PC-9 (cell line): ENCODE measurements at regions of chr2 and their contacts with region 1.

Region 1: GRCh38 chr2:55232084-55232862 is at the starts of genes CLHC1 and RPS27A:
- DNase-seq: peak; percentile 94 to 98
- H3K4me3 ChIP-seq: peak within 1 kb of the TSS; percentile 97
- H3K27ac ChIP-seq: peak within 1 kb of the TSS; percentile 83
- H3K4me1 ChIP-seq: peaks cover 29% of the 10 kb centered on the region
- H3K27me3 ChIP-seq: no peaks in the 10 kb centered on the region
- CTCF ChIP-seq: peak; percentile 7; the same call in 1 of the 2 replicates
- total RNA-seq, gene CLHC1: 20.5 and 27.1 TPM in 2 replicates
- total RNA-seq, gene RPS27A: 1,269 and 1,616 TPM in 2 replicates

Region 2: GRCh38 chr2:54673501-54673998 is 558.7 kb before region 1 on chr2:
- CTCF ChIA-PET with region 1: no interaction called
- POLR2A ChIA-PET with region 1: no interaction called
- intact Hi-C with region 1: loop called (anchors 2 kb)
- DNase-seq: peak in 1 of 2 experiments; percentile 60
- H3K4me3 ChIP-seq: no peak overlapping the region
- H3K27ac ChIP-seq: peak overlapping the region; percentile 58
- H3K4me1 ChIP-seq: peaks cover 31% of the 10 kb centered on the region
- H3K27me3 ChIP-seq: no peaks in the 10 kb centered on the region
- CTCF ChIP-seq: no peak

Region 3: GRCh38 chr2:55014962-55015939 is 217.0 kb before region 1 on chr2:
- CTCF ChIA-PET with region 1: no interaction called
- POLR2A ChIA-PET with region 1: no interaction called
- intact Hi-C with region 1: loop called (anchors 5 kb)
- DNase-seq: peak; percentile 40 to 76
- H3K4me3 ChIP-seq: peak overlapping the region; percentile 9
- H3K27ac ChIP-seq: peak overlapping the region; percentile 35
- H3K4me1 ChIP-seq: peaks cover 89% of the 10 kb centered on the region
- H3K27me3 ChIP-seq: no peaks in the 10 kb centered on the region
- CTCF ChIP-seq: peak; percentile 83

Region 4: GRCh38 chr2:55196506-55196905 is 35.8 kb before region 1 on chr2:
- CTCF ChIA-PET with region 1: no interaction called
- POLR2A ChIA-PET with region 1: no interaction called
- intact Hi-C with region 1: no loop called
- DNase-seq: no peak
- H3K4me3 ChIP-seq: no peak overlapping the region
- H3K27ac ChIP-seq: no peak overlapping the region
- H3K4me1 ChIP-seq: no peaks in the 10 kb centered on the region
- H3K27me3 ChIP-seq: no peaks in the 10 kb centered on the region
- CTCF ChIP-seq: no peak